ENCODE measurements at regions of chr9 and their contacts with region 1.

Region 1: GRCh38 chr9:3045153-3045552 is 201.3 kb upstream of the PUM3 start:
- DNase-seq: no peak
- H3K4me3 ChIP-seq: no peak overlapping the region
- CTCF ChIP-seq: no peak
- POLR2A ChIP-seq: no peak

Region 2: DNA sequence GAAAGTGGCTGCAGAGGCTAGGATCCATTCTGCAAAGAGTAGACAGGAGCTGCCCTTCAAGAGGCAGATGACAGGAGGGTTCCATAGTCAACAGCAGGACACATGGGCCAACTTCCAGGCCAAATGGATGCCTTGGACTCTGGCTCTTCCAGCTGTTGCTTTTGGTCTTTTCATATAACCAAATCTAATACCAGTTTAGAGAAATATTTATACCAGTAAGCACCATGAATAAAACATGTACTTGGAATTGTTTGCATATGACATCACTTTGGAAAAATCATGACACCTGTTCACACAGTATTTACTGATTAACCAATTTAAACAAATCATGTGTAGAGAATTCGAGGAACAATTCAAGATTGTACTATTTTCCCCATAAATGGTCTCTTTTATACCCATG is 1513.7 kb before region 1 on chr9:
- intact Hi-C with region 1: loop called (anchors 5 kb)
- DNase-seq: no peak
- H3K4me3 ChIP-seq: no peak overlapping the region
- CTCF ChIP-seq: no peak
- POLR2A ChIP-seq: no peak